Left cardiac atrium (tissue), 4 donors: ENCODE measurements at regions of chr2 and their contacts with region 1.

Region 1: DNA sequence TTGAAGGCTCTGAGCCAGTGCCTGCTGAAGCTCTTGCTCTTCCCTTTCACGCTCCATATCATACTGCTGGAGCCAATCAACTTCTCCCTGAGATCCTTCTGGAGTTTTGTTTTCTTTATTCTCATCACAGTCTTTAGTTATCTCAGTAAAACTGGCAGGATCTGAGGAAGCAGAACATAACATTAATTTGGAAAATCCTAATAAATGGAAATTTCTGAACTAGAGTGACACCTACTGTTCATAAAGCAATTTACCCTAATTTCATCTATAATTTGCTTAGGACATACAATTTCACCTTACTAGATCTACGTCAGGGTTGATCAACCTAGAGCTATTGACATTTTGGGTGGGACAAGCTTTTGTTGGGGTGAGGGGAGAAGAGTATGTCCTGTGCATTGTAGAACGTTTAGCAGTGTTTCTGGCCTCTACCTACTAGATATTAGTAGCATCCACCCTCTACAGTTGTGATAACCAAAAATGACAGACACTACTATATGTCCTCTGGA is 47.1 kb downstream of the VIL1 start:
- DNase-seq: no peak
- ATAC-seq: peak; percentile 19 to 44

Region 2: GRCh38 chr2:218186355-218186766 is 279.7 kb before region 1 on chr2:
- intact Hi-C with region 1: loop called in 1 of 2 experiments (anchors 10 kb)
- DNase-seq: peak; percentile 55
- ATAC-seq: peak; percentile 89 to 90

Region 3: DNA sequence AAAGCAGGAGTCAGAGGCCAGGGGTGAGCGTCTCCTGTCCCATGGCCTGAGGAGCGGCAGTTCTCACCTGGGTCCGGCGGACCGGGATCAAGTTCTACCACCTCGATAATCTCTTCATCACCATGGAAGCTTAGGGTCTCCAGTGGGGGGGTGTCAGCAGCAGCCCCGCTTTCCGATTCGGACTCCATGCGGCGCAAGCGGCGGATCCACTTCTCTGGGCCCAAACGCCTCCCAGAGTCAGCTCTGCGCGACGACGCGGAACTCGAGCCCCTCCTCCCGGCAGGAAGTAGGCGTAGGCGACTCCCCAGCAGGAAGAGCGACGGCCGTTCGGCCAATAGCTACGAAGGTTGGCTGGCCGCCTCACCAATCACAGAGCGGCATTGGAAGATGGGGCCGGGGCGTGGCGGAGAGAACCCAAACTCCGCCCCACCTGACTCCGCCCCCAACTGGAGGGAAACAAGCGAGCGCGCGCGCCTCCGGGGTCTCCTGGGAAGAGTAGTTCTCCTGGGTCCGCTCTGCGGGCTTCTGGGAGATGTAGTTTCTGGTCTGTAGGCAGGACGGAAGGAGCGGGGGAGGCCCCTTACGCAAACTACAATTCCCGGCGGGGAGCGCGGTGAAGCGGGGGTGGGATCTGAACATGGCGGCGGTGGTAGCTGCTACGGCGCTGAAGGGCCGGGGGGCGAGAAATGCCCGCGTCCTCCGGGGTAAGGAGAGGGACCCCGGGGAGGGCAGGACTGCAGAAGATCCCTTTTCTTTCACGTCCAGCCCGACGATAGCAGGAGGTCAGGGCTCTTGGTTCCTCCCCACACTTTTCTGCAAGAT is 196.0 kb before region 1 on chr2 and contains the starts of genes AAMP and PNKD:
- intact Hi-C with region 1: loop called in 1 of 2 experiments (anchors 10 kb)
- DNase-seq: peak; percentile 100
- ATAC-seq: peak; percentile 93 to 95
- total RNA-seq, gene AAMP: 49.0 to 52.5 TPM
- total RNA-seq, gene PNKD: 62.4 to 68.5 TPM

Region 4: DNA sequence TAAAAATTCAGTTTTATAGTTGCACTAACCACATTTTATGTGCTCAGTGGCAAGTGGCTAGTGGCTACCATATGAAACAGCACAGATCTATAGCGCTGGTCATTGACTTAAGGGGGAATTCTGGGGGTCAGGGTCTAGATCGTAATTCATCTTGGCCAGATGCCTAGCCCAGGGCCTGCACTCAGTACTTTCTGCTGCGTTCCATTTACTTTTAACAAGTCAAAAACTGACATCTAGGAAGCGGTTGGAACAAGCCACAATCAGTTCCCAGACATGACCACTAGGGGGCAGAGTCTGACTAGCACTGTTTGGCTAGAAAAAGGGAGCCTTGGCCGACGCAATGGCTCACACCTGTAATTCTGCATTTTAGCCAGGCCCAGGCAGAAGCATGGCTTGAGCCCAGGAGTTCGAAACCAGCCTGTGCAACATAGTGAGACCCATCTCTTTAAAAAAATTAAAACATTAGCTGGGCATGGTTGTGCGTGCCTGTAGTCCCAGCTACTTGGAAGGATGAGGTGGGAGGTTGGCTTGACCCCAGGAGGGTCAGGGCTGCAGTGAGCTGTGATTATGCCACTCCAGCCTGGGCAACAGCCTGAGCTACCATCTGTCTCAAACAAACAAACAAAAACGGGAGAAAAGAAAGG is 164.8 kb before region 1 on chr2:
- intact Hi-C with region 1: loop called in 1 of 2 experiments (anchors 10 kb)
- DNase-seq: peak; percentile 83
- ATAC-seq: peak; percentile 73 to 84

Region 5: DNA sequence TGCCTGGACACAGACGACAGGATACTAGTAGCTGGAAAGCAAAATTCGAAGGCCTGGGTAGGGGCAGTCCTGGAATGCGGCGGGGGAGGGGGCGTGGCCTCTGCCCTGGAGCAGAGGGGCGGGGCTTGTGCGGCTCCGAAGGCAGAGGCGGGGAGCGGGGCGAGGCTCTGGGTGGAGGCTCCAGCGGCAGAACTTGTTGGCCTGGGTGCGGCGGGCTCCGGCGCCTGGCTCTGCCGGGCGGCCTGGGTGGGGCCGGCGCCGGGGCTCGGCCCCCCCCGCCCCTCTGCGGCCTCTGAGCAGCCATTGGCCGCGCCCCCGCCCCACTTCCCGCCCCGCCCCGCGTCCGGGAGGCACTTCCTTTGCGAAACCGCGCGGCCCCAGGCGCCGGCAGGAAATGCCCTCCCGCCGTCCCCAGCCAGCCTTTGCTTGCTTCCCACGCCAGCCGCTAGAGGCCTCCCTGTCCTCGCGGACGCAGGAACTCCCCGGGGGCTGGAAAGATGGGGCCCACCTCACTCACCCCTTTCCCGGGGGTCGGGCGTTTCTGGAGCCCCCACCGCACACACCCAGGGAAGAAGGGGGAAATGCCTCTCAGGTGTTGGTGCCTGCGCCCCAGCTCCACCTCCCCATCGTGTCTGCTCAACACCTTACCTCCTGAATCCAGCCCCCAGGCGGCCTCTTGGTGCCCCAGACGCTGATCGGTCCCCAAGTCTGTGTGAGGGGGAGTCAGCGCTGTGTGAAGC is 59.7 kb before region 1 on chr2:
- intact Hi-C with region 1: loop called in 1 of 2 experiments (anchors 5 kb)
- DNase-seq: peak; percentile 98
- ATAC-seq: peak; percentile 88 to 92

Region 6: GRCh38 chr2:218659258-218659987 is 193.4 kb after region 1 on chr2 and contains the starts of genes BCS1L and ZNF142:
- intact Hi-C with region 1: no loop called
- DNase-seq: peak; percentile 95
- ATAC-seq: peak; percentile 96 to 97
- total RNA-seq, gene BCS1L: 33.3 to 35.3 TPM
- total RNA-seq, gene ZNF142: 12.6 to 17.8 TPM